Endothelial cell of umbilical vein (primary cell): ENCODE measurements at regions of chr9 and their contacts with region 1.

Region 1: GRCh38 chr9:23073136-23073535 is 626.5 kb downstream of the DMRTA1 start:
- DNase-seq: peak; percentile 15
- H3K4me3 ChIP-seq: no peak overlapping the region
- H3K27ac ChIP-seq: no peak overlapping the region
- H3K4me1 ChIP-seq: no peaks in the 10 kb centered on the region
- H3K27me3 ChIP-seq: no peaks in the 10 kb centered on the region
- CTCF ChIP-seq: no peak
- POLR2A ChIP-seq: no peak

Region 2: GRCh38 chr9:22307013-22307711 is 766.0 kb before region 1 on chr9:
- CTCF ChIA-PET with region 1: no interaction called
- POLR2A ChIA-PET with region 1: interaction called, 12 read pairs
- dilution Hi-C with region 1: no loop called
- intact Hi-C with region 1: no loop called
- DNase-seq: peak; percentile 54
- H3K4me3 ChIP-seq: no peak overlapping the region
- H3K27ac ChIP-seq: no peak overlapping the region
- H3K4me1 ChIP-seq: no peaks in the 10 kb centered on the region
- H3K27me3 ChIP-seq: peaks cover 0 to 5% of the 10 kb centered on the region in 2 experiments
- CTCF ChIP-seq: peak; percentile 48 to 59
- POLR2A ChIP-seq: no peak